ENCODE measurements at regions of chr17 and their contacts with region 1.

Region 1: DNA sequence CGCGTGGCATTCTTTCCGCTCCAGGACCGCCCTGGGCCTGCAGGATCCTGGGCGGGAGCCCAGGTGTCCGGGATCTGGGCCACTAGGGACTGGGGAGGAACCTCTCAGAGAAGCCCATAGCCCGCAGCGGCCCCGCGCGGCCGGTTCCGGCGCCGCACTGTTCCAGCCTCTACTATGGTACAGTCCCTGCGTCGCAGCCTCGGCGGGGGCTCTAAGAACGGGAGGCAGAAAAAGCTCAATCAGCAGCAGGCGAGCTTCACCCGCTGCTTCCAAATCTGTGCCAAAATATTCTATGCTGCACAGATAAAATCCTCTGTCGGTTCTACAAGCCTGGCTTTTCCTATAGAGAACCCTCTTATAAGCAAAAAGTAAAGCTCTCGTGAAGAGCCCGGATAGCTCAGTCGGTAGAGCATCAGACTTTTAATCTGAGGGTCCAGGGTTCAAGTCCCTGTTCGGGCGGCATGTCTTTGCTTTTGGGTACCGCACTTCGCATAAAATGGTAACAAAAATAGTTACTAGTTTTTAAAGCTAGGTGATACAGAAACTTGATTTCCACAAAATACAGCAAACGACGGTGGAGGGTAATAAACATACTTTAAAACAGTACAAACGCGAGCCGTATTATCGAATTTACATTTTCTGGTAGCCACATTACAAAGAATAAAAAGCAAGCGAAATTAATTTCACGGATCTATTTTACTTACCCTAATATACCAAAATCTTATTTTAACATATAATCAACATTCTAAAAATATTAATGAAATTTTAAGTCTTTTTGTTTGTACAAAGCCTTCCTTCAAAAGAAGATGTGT is 661 bp upstream of the ALOXE3 start:
- DNase-seq: peak; percentile 88 to 92
- H3K4me3 ChIP-seq: peak overlapping the region; percentile 51 to 70
- H3K27ac ChIP-seq: peak overlapping the region; percentile 69 to 83
- H3K4me1 ChIP-seq: peaks cover 0 to 59% (median 54%) of the 10 kb centered on the region in 4 donors
- H3K27me3 ChIP-seq: peaks cover 0 to 38% of the 10 kb centered on the region in 2 donors
- CTCF ChIP-seq: peak; percentile 89 to 90

Region 2: GRCh38 chr17:8162233-8162996 is 43.4 kb after region 1 on chr17 and contains the start of gene VAMP2:
- intact Hi-C with region 1: loop called (anchors 5 kb)
- DNase-seq: peak; percentile 73 to 91
- H3K4me3 ChIP-seq: peak within 1 kb of the TSS; percentile 85 to 99
- H3K27ac ChIP-seq: peak within 1 kb of the TSS; percentile 99 to 100
- H3K4me1 ChIP-seq: peaks cover 0 to 63% (median 45%) of the 10 kb centered on the region in 4 donors
- H3K27me3 ChIP-seq: no peaks in the 10 kb centered on the region
- CTCF ChIP-seq: no peak

Region 3: DNA sequence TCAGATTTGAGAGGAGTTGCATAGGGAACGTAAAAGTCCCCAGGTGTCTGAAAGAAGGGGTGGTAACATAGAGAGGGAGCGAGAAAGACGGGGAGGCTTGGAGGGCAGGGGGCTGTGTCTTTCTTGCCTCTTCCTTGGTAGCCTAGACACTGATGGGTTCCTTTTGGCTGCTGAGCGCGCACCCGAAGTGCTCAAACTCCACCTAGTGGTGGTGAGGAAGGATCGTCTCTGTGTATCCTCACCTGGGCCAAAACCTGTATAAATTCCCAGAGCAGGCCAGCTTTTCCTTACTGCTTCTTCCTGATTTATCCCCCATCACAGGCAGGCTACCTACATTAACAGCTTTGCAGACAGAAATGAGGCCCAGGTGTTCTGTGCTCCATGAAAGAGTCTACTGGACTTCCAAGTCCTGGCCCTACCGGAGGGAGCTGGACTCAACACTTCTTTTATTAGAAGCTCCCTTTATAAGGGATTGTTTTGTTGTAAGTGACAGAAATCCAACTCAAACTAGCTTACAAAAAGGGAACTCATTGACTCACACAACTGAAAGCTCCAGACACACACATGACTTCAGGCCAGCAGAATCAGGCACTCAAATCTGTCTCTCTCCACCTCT is 181.8 kb after region 1 on chr17:
- intact Hi-C with region 1: loop called (anchors 10 kb)
- DNase-seq: peak in 1 of 2 donors; percentile 50
- H3K4me3 ChIP-seq: no peak overlapping the region
- H3K27ac ChIP-seq: no peak overlapping the region
- H3K4me1 ChIP-seq: peaks cover 0 to under 1% (median 0%) of the 10 kb centered on the region in 4 donors
- H3K27me3 ChIP-seq: no peaks in the 10 kb centered on the region
- CTCF ChIP-seq: peak; percentile 76 to 82